K562 (cell line): ENCODE measurements at regions of chr13 and their contacts with region 1.

Region 1: GRCh38 chr13:32310134-32310706 is 4.9 kb downstream of the ZAR1L start:
- DNase-seq: peak; percentile 14 to 53 (median 15)
- ATAC-seq: peak; percentile 88
- H3K4me3 ChIP-seq: no peak overlapping the region
- H3K27ac ChIP-seq: no peak overlapping the region
- H3K4me1 ChIP-seq: peaks cover 0 to 7% of the 10 kb centered on the region in 2 experiments; a peak in 2 of 5 replicates
- H3K27me3 ChIP-seq: no peaks in the 10 kb centered on the region
- CTCF ChIP-seq: peak; percentile 43 to 64 (median 54); a peak in 5 of 6 replicates
- EP300 ChIP-seq: no peak
- POLR2A ChIP-seq: no peak
- RAD21 ChIP-seq: peak; percentile 63 to 68

Region 2: GRCh38 chr13:32019612-32020233 is 290.5 kb before region 1 on chr13:
- CTCF ChIA-PET with region 1: interaction called, 3 read pairs
- POLR2A ChIA-PET with region 1: no interaction called
- in situ Hi-C with region 1: no loop called
- intact Hi-C with region 1: loop called (anchors 5 kb)
- DNase-seq: peak; percentile 11 to 28 (median 18)
- ATAC-seq: peak; percentile 61; the same call in 1 of the 3 replicates
- H3K4me3 ChIP-seq: no peak overlapping the region
- H3K27ac ChIP-seq: no peak overlapping the region
- H3K4me1 ChIP-seq: no peaks in the 10 kb centered on the region
- H3K27me3 ChIP-seq: no peaks in the 10 kb centered on the region
- CTCF ChIP-seq: peak; percentile 35 to 46 (median 45); a peak in 4 of 6 replicates
- EP300 ChIP-seq: no peak
- POLR2A ChIP-seq: no peak
- RAD21 ChIP-seq: peak; percentile 47 to 60

Region 3: GRCh38 chr13:32246468-32246867 is 63.8 kb before region 1 on chr13:
- CTCF ChIA-PET with region 1: interaction called, 4 read pairs
- POLR2A ChIA-PET with region 1: no interaction called
- in situ Hi-C with region 1: no loop called
- intact Hi-C with region 1: loop called (anchors 1 kb)
- DNase-seq: peak; percentile 45 to 71 (median 56)
- ATAC-seq: peak; percentile 99
- H3K4me3 ChIP-seq: no peak overlapping the region
- H3K27ac ChIP-seq: no peak overlapping the region
- H3K4me1 ChIP-seq: no peaks in the 10 kb centered on the region
- H3K27me3 ChIP-seq: peaks cover 0 to 10% of the 10 kb centered on the region in 2 experiments; a peak in 2 of 5 replicates
- CTCF ChIP-seq: peak; percentile 69 to 74 (median 73)
- EP300 ChIP-seq: no peak
- POLR2A ChIP-seq: no peak
- RAD21 ChIP-seq: peak; percentile 47 to 70

Region 4: GRCh38 chr13:32515246-32515645 is 205.0 kb after region 1 on chr13:
- CTCF ChIA-PET with region 1: no interaction called
- POLR2A ChIA-PET with region 1: no interaction called
- in situ Hi-C with region 1: no loop called
- intact Hi-C with region 1: no loop called
- DNase-seq: no peak
- ATAC-seq: no peak; the same call in 2 of the 3 replicates
- H3K4me3 ChIP-seq: no peak overlapping the region
- H3K27ac ChIP-seq: no peak overlapping the region
- H3K4me1 ChIP-seq: no peaks in the 10 kb centered on the region
- H3K27me3 ChIP-seq: no peaks in the 10 kb centered on the region
- CTCF ChIP-seq: no peak
- EP300 ChIP-seq: no peak
- POLR2A ChIP-seq: no peak
- RAD21 ChIP-seq: no peak